Thyroid gland (tissue), 4 donors: ENCODE measurements at regions of chr2 and their contacts with region 1.

Region 1: GRCh38 chr2:109545828-109546713 is 67.7 kb downstream of the SEPTIN10 start:
- DNase-seq: peak; percentile 65 to 69
- H3K4me3 ChIP-seq: no peak overlapping the region
- H3K27ac ChIP-seq: no peak overlapping the region
- H3K4me1 ChIP-seq: no peaks in the 10 kb centered on the region
- H3K27me3 ChIP-seq: no peaks in the 10 kb centered on the region
- CTCF ChIP-seq: peak; percentile 70 to 98 (median 94)
- POLR2A ChIP-seq: no peak

Region 2: GRCh38 chr2:109711230-109712122 is 165.4 kb after region 1 on chr2:
- intact Hi-C with region 1: loop called (anchors 5 kb)
- DNase-seq: no peak
- H3K4me3 ChIP-seq: no peak overlapping the region
- H3K27ac ChIP-seq: no peak overlapping the region
- H3K4me1 ChIP-seq: no peaks in the 10 kb centered on the region
- H3K27me3 ChIP-seq: no peaks in the 10 kb centered on the region
- CTCF ChIP-seq: no peak
- POLR2A ChIP-seq: no peak

Region 3: DNA sequence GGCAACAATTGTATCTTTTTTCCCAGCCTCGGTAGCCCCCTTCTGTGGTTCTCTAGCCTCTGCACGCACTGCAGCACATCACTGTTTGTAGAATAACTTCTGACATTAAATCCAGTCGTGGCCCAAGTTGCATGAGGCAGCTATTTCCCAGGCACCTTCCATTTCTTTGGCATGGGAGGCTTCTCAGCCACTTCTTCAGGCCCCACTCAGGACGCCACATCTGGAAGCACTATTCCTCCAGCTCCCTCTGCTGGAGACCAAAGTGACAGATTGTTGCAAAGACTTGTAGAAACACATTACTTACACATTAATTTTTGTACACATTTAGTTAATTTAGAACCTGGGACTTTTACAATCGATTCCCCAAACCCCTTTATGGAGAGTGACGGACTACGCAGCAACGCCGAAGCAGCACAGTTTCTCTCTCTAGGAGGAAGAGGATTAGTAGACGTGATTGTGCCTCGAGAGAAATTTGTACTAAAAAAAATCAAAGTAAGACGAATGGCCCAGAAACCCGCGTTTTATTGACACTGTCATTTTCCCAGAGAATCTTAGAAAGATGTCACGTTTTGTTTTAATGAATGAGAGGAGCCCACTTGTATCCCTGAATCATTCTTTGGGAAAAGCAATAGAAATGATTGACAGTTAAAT is 190.2 kb after region 1 on chr2:
- intact Hi-C with region 1: loop called (anchors 5 kb)
- DNase-seq: peak; percentile 64 to 66
- H3K4me3 ChIP-seq: no peak overlapping the region
- H3K27ac ChIP-seq: no peak overlapping the region
- H3K4me1 ChIP-seq: no peaks in the 10 kb centered on the region
- H3K27me3 ChIP-seq: no peaks in the 10 kb centered on the region
- CTCF ChIP-seq: peak in 5 of 6 experiments; percentile 44 to 76 (median 69)
- POLR2A ChIP-seq: no peak